SK-N-SH (cell line): ENCODE measurements at regions of chr3 and their contacts with region 1.

Region 1: DNA sequence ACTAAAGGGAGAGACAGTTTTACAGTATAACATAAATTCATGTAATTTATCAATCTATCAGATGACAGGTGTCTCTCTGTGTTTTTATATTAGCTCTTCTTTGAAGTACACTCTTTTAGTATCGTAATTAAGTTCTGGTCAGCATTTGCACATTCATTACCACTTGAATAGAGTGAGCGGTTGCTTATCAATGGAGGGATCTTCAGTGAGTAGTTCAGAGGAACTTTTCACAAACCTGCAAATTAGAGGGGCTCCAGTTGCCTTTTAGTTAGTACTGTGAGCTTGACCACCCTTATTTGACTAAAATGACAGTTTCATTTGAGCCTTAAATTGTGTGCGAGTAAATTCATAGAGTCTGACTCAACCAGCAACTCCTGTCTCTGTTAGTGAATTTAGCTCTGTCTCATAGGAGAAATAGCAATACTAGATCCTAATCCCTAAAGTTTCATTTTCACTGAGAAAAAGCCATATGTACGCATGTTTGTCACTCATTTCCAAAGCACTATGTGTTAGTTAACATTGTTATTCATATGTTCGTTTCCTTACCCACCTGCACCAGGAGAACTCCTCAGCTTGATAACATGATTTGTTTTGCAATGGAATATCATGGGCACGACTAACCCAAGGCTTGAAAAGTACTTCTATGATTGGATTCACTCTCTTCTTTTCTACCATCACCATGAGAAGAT is 57.5 kb upstream of the ZBED2 start:
- DNase-seq: no peak
- H3K4me3 ChIP-seq: no peak overlapping the region
- H3K27ac ChIP-seq: no peak overlapping the region
- H3K4me1 ChIP-seq: no peaks in the 10 kb centered on the region
- H3K27me3 ChIP-seq: no peaks in the 10 kb centered on the region
- CTCF ChIP-seq: no peak
- EP300 ChIP-seq: no peak
- RAD21 ChIP-seq: no peak

Region 2: GRCh38 chr3:111582108-111582449 is 70.6 kb before region 1 on chr3:
- CTCF ChIA-PET with region 1: no interaction called
- POLR2A ChIA-PET with region 1: no interaction called
- DNase-seq: no peak
- H3K4me3 ChIP-seq: no peak overlapping the region
- H3K27ac ChIP-seq: peak overlapping the region; percentile 68 to 95; a peak in 3 of 4 replicates
- H3K4me1 ChIP-seq: peaks cover 0 to 20% of the 10 kb centered on the region in 2 experiments; a peak in 1 of 4 replicates
- H3K27me3 ChIP-seq: no peaks in the 10 kb centered on the region
- CTCF ChIP-seq: no peak
- EP300 ChIP-seq: peak; percentile 29 to 95; a peak in 3 of 4 replicates
- RAD21 ChIP-seq: no peak

Region 3: GRCh38 chr3:111627092-111627491 is 25.5 kb before region 1 on chr3:
- CTCF ChIA-PET with region 1: no interaction called
- POLR2A ChIA-PET with region 1: no interaction called
- DNase-seq: no peak
- H3K4me3 ChIP-seq: no peak overlapping the region
- H3K27ac ChIP-seq: no peak overlapping the region
- H3K4me1 ChIP-seq: no peaks in the 10 kb centered on the region; a peak in 1 of 4 replicates
- H3K27me3 ChIP-seq: no peaks in the 10 kb centered on the region
- CTCF ChIP-seq: no peak
- EP300 ChIP-seq: no peak
- RAD21 ChIP-seq: no peak

Region 4: GRCh38 chr3:111668912-111669488 is 16.4 kb after region 1 on chr3:
- CTCF ChIA-PET with region 1: interaction called, 16 read pairs
- POLR2A ChIA-PET with region 1: no interaction called
- DNase-seq: peak; percentile 48
- H3K4me3 ChIP-seq: no peak overlapping the region; a peak in 1 of 4 replicates
- H3K27ac ChIP-seq: peak overlapping the region in 1 of 2 experiments; percentile 80; a peak in 2 of 4 replicates
- H3K4me1 ChIP-seq: peaks cover 0 to 30% of the 10 kb centered on the region in 2 experiments
- H3K27me3 ChIP-seq: no peaks in the 10 kb centered on the region
- CTCF ChIP-seq: peak; percentile 90
- EP300 ChIP-seq: no peak; a peak in 1 of 4 replicates
- RAD21 ChIP-seq: peak; percentile 95